ENCODE measurements at regions of chr11 and their contacts with region 1.

Region 1: GRCh38 chr11:82682003-82682751 is 51.5 kb downstream of the FAM181B start:
- DNase-seq: peak; percentile 27
- H3K4me3 Mint-ChIP-seq: no peak overlapping the region
- H3K27ac Mint-ChIP-seq: peak overlapping the region; percentile 34
- H3K4me1 Mint-ChIP-seq: no peaks in the 10 kb centered on the region
- H3K27me3 Mint-ChIP-seq: peaks cover 19% of the 10 kb centered on the region

Region 2: DNA sequence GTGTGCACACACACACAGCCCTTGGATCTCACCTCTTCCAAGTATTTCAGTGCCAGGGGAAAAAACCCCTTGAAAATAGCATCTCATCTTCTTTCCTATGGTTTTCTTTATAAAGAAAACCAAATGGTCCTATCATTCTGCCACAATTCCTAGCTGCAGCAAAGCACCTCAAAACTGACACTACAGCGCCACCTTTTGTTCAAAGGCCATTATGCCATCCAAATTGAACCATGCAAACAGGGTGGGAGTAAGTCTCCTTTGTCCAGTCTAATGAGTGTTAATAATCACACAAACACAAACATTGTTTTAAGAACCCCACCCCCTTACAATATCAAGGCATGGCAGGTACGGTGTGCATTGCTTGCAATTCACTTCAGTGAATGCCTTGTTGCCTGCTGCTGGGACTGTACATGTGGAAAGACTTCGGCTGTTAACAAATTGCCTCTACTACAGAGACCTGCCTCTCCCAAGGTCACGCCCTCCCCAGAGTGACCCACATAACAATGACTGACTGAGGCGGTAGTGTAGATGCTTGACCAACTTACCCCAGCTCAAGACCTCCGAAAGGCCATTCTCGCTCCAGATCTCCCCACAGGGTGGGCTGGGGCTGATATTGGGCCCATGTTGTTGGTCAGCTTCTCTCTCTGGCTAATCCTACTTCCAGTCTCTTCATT is 19.8 kb after region 1 on chr11:
- CTCF ChIA-PET with region 1: interaction called, 20 read pairs
- DNase-seq: peak; percentile 42
- H3K4me3 Mint-ChIP-seq: no peak overlapping the region
- H3K27ac Mint-ChIP-seq: no peak overlapping the region
- H3K4me1 Mint-ChIP-seq: no peaks in the 10 kb centered on the region
- H3K27me3 Mint-ChIP-seq: peaks cover 8% of the 10 kb centered on the region